Esophagus squamous epithelium (tissue), 5 donors: ENCODE measurements at regions of chr7 and their contacts with region 1.

Region 1: DNA sequence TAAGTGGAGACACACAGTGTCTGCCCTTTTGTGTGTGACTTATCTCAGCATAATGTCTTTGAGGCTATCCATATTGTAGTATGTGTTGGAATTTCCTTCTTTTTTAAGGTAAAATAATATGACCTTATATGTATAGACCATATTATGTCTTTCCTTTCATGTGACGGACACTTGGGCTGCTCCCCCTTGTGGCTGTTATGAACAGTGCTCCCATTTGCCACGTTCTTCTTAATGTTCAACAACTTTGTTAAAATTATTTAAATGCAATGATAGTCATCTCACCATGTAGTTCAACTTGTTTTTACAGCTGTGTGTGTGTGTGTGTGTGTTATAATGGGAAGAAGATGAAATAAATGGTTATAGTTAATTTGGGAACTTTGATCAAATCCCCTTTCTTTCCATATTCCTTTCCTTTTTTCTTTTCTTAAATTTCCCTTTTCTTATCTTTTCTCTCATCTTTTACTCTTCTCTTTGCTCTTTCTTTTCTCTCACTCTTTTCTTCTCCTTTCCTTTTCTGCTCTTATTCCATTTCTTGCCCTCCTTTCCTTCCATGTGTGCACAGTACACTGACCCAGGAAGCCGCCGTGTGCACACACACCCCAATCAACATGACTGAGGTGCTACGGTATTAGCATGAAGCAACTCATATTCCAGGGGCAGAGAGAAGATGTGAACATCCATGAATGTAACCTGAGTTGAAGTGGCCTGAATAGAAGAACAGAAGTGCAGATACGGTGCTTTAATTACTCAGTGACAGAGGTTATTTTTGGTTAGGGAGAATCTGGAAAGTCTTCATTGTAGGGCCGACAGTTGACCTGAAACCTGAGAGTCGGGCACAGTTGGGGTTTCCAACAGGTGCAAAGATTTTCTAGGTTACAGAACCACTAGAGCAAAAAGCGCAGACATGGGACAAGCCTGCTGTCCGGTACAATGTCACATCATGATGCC is 596.7 kb downstream of the SDK1 start:
- DNase-seq: no peak
- H3K4me3 ChIP-seq: no peak overlapping the region
- H3K27ac ChIP-seq: no peak overlapping the region
- H3K4me1 ChIP-seq: no peaks in the 10 kb centered on the region
- H3K27me3 ChIP-seq: no peaks in the 10 kb centered on the region
- CTCF ChIP-seq: peak; percentile 41 to 82 (median 72)
- POLR2A ChIP-seq: no peak

Region 2: GRCh38 chr7:3300651-3301378 is 596.9 kb before region 1 on chr7 and contains the start of gene SDK1:
- intact Hi-C with region 1: loop called (anchors 10 kb)
- DNase-seq: peak; percentile 40
- H3K4me3 ChIP-seq: peak within 1 kb of the TSS; percentile 36 to 79 (median 60)
- H3K27ac ChIP-seq: peak within 1 kb of the TSS; percentile 49 to 79 (median 65)
- H3K4me1 ChIP-seq: peaks cover 7 to 23% (median 14%) of the 10 kb centered on the region in 3 donors
- H3K27me3 ChIP-seq: peaks cover 0 to 35% (median 5%) of the 10 kb centered on the region in 4 donors
- CTCF ChIP-seq: peak; percentile 80 to 98 (median 98)
- POLR2A ChIP-seq: peak in 2 of 4 donors; percentile 27 to 42
- total RNA-seq, gene SDK1: 2.0 to 9.3 (median 3.8) TPM

Region 3: DNA sequence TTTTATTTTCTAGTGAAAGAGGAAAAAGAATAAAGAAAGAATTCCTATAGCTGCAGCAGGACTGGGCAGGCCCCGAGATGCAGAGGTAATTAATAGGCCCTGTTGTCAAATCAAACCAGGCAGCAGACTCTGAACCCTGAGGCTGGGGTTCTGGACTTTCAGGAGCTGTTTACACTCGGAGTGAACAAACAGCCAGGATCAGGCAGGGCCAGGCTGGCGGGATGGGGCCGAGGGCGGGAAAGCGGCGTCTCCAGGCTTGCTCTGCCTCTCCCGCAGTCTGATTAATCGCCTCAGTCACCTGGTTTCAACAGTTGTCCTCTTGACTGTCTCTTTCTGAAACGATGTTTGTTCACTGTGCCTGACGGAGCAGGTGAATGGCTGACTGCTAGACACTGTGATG is 109.0 kb after region 1 on chr7:
- intact Hi-C with region 1: no loop called
- DNase-seq: no peak
- H3K4me3 ChIP-seq: no peak overlapping the region
- H3K27ac ChIP-seq: peak overlapping the region in 3 of 4 donors; percentile 25 to 68 (median 29)
- H3K4me1 ChIP-seq: peaks cover 0 to 22% (median 0%) of the 10 kb centered on the region in 3 donors
- H3K27me3 ChIP-seq: peaks cover 0 to 50% (median 0%) of the 10 kb centered on the region in 4 donors
- CTCF ChIP-seq: no peak
- POLR2A ChIP-seq: no peak